Vagina (tissue), 2 donors: ENCODE measurements at regions of chr7 and their contacts with region 1.

Region 1: DNA sequence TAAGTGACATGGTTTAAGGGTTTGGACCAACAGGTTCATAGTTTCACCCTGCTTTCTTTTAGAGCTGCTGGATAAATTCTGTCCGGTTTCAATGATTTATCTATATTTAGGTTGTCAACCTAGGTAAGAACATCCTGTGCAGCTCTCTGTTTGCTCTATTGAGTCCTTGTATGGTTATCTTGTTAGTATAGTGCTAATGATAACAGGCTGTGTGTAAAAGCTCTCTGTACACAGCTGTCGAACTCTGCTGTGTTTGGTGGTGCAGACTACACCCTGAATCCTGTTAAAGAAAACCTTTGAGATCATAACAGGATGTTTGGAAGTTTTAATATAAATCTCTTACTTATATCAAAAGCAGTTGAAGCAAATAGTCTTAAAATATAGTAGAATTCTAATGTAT is 219.2 kb downstream of the SDK1 start:
- DNase-seq: no peak
- H3K4me3 ChIP-seq: no peak overlapping the region
- H3K27ac ChIP-seq: no peak overlapping the region
- H3K4me1 ChIP-seq: no peaks in the 10 kb centered on the region
- H3K27me3 ChIP-seq: no peaks in the 10 kb centered on the region
- CTCF ChIP-seq: no peak
- POLR2A ChIP-seq: no peak

Region 2: DNA sequence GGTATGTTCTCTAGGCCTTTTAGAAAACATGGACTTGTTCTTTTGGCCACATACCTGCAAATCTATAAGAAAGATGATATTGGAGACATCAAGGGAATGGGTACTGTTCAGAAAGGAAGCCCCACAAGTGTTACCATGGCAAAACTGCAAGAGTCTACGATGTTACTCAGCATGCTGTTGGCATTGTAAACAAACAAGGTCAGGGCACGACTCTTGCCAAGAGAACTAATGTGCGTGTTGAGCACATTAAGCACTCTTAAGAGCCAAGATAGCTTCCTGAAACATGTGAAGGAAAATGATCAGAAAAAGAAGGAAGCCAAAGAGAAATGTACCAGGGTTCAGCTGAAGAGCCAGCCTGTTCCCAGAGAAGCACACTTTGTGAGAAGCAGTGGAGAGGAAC is 182.0 kb before region 1 on chr7:
- intact Hi-C with region 1: no loop called
- DNase-seq: no peak
- H3K4me3 ChIP-seq: no peak overlapping the region
- H3K27ac ChIP-seq: no peak overlapping the region
- H3K4me1 ChIP-seq: peaks cover 12% of the 10 kb centered on the region
- H3K27me3 ChIP-seq: no peaks in the 10 kb centered on the region
- CTCF ChIP-seq: no peak
- POLR2A ChIP-seq: no peak

Region 3: GRCh38 chr7:3482147-3482964 is 37.9 kb before region 1 on chr7:
- intact Hi-C with region 1: loop called (anchors 1 kb)
- DNase-seq: no peak
- H3K4me3 ChIP-seq: no peak overlapping the region
- H3K27ac ChIP-seq: no peak overlapping the region
- H3K4me1 ChIP-seq: no peaks in the 10 kb centered on the region
- H3K27me3 ChIP-seq: no peaks in the 10 kb centered on the region
- CTCF ChIP-seq: no peak
- POLR2A ChIP-seq: no peak